Head of caudate nucleus (tissue), 42 donors: ENCODE measurements at regions of chrX and their contacts with region 1.

Region 1: DNA sequence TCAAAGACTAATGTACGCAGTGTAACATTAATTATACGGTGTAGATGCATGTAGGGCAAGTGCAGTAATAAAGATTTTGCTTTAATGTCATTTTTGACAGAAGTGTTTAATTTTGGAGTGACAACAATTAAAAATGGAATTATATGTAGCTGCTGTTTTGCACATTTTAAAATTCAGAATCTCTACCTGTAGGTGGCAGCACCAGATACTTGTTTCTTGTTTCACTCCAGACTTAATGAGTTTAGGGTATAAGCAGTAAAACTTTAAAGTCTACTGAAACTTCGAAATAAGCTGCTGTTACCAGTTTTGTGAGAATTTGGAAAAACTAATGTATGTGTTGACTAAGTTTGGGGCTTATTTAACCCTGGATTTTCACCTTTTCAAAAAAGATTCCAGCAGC is 144.9 kb downstream of the POLA1 start:
- DNase-seq: peak in 12 of 42 donors; percentile 10 to 50 (median 24)

Region 2: DNA sequence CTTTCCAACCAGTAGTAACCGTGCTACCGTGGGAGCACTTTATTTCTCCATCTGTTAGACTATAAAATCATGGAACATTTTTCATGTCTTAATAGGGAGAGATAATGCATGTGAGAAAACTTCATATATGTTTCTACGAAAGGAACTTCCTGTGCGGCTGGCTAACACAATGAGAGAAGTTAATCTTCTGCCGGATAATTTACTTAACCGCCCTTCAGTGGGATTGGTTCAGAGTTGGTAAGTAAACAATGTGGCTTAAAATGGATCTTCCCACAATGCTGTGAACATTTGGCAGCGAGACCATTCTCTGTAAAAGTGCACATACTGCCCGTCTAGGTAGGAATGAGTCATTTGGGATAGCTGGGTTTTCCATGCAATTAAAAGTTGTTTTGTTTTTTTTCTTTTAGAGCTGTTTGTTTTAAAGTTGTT is 344.0 kb before region 1 on chrX:
- intact Hi-C with region 1: no loop called
- DNase-seq: no peak

Region 3: GRCh38 chrX:24668111-24668510 is 170.5 kb before region 1 on chrX:
- intact Hi-C with region 1: no loop called
- DNase-seq: no peak

Region 4: GRCh38 chrX:25144043-25144940 is 305.7 kb after region 1 on chrX:
- intact Hi-C with region 1: loop called (anchors 10 kb)
- DNase-seq: peak; percentile 33 to 86 (median 67)